Activated CD4-positive, alpha-beta memory T cell treated with anti-CD3 and anti-CD28 coated beads, Interleukin-2, amount 10 ng/mL, durations not matched to agents 7 days and 5 days (primary cell): ENCODE measurements at regions of chr3 and their contacts with region 1.

Region 1: DNA sequence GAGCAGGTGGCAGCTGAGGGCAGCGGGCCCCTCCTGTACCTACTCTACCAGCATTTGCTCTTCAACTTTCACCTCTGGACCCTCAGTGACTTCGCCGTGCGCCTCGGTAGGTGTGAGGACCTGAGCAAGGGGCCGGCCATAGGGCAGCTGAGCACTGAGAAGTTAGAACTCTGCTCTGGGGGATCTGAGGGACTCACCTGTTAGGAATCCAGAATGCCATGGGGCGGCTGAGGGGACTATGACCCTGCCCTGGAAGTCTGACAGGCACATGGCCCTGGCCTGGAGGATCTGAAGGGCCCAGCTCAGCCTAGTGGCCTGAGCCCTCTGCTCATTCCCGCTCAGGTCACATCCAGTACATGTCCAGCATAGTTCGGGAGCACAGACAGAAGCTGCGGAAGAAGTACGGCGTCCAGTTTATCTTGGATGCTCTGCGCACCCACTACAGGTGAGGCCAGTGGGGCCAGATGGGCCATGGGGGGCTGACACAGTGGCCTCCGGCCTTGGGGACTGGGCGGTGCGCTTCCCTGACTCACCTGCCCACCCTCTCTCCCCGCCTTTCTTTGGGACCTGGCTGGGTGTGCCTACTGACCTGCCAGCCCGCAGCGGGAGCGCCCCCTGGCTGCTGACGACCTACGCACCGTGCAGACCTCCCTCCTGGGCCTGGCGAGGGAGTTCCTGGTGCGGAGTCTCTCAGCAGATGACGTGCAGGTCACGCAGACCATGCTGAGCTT is 18.8 kb downstream of the NBEAL2 start:
- DNase-seq: peak; percentile 72
- H3K4me3 Mint-ChIP-seq: no peak overlapping the region
- H3K27ac Mint-ChIP-seq: peak overlapping the region; percentile 61
- H3K4me1 Mint-ChIP-seq: peaks cover 22% of the 10 kb centered on the region
- H3K27me3 Mint-ChIP-seq: no peaks in the 10 kb centered on the region

Region 2: DNA sequence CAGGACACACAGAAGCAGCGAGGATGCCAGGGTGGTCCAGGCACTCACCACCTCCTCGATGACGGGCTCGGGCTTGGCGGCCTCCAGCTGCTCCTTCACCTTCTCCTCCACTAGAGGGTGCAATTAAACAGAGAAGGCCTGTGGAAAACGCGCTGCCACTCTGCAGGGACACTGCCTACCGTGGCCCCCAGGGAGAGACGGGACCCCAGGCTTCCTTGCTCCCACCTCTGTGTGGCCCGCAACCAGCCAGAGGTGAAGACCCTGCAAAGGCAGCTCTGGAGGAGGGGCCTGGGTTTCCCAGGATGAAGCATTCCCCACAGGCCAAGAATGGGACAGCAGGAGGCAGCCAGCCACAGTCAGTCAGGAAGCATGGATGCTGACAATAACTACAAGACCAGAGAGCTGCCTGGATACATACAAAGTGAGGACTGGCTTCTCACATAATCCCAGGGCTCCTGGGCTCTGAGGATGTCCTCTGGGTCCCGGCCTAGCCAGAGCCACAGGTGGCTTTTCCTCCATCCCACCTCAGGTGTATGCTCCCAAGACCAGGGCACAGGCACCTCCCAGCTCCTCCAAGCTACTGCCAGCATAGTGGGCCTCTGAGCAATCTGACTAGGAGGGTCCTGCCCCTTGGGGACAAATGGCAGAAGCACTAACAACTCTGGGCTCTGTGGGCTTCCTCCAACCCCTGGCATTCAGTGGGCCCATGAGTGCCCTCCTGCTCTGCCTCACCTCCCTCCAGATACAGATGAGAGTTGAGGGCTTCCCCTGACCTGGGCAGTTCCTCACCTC is 74.5 kb before region 1 on chr3:
- CTCF ChIA-PET with region 1: interaction called, 18 read pairs
- POLR2A ChIA-PET with region 1: interaction called, 4 read pairs
- DNase-seq: peak; percentile 49
- H3K4me3 Mint-ChIP-seq: no peak overlapping the region
- H3K27ac Mint-ChIP-seq: peak overlapping the region; percentile 49
- H3K4me1 Mint-ChIP-seq: peaks cover 44% of the 10 kb centered on the region
- H3K27me3 Mint-ChIP-seq: no peaks in the 10 kb centered on the region